Activated T-helper 2 cell treated with anti-CD3 and anti-CD28 coated beads, Interferon-gamma antibody, Interleukin-2, Interleukin-4, amounts not matched to agents 10 μg/mL and 5 μg/mL and 100 μg/mL, durations not matched to agents 14 hours and 24 hours and 36 hours (primary cell): ENCODE measurements at regions of chr2 and their contacts with region 1.

Region 1: DNA sequence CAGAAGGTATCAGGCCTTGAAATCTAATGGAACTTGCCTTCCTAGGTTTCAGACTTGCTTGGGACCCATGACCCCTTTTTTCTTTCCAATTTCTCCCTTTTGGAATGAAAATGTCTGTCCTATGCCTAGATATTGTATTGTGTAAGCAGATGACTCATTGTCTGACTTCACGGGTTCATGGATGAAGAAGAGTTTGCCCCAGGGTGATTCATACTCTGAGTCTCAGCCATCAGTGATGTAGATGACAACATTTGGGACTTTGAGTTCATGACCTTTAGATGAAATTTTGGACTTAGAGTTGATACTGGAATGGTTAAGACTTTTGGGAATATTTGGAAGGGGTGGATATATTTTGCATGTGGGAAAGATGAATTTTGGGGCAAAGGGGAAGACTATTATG is 11.2 kb upstream of the SCYGR5 start:
- DNase-seq: no peak
- H3K4me3 Mint-ChIP-seq: no peak overlapping the region
- H3K27ac Mint-ChIP-seq: no peak overlapping the region
- H3K4me1 Mint-ChIP-seq: peaks cover 2% of the 10 kb centered on the region
- H3K27me3 Mint-ChIP-seq: peaks cover 3% of the 10 kb centered on the region

Region 2: DNA sequence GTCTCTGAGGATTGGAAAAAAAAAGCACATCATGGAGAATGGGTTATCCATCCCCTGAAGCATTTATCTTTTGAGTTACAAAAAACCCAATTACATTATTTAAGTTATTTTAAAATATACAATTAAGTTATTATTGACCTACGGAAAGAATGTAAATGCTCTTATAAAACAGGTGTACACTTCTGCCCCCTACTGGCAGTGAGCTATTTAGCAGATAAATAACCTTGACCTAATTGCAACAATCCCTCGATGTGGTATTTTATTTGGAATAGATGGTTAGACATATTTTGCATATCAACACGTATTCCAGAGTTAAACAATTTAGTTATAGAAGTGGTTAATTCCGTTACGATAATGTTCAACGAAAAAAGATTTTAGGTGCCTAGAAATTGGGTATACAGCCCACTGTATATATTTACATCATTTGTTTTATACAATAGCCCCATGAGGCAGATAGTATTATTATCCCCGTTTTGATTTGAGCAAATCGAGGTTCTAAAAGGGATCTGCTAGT is 206.8 kb after region 1 on chr2:
- intact Hi-C with region 1: loop called (anchors 1 kb)
- DNase-seq: no peak
- H3K4me3 Mint-ChIP-seq: no peak overlapping the region
- H3K27ac Mint-ChIP-seq: no peak overlapping the region
- H3K4me1 Mint-ChIP-seq: no peaks in the 10 kb centered on the region
- H3K27me3 Mint-ChIP-seq: peaks cover 4% of the 10 kb centered on the region

Region 3: GRCh38 chr2:227884511-227884947 is 229.1 kb after region 1 on chr2:
- intact Hi-C with region 1: loop called (anchors 1 kb)
- DNase-seq: peak; percentile 31
- H3K4me3 Mint-ChIP-seq: no peak overlapping the region
- H3K27ac Mint-ChIP-seq: no peak overlapping the region
- H3K4me1 Mint-ChIP-seq: no peaks in the 10 kb centered on the region
- H3K27me3 Mint-ChIP-seq: no peaks in the 10 kb centered on the region

Region 4: DNA sequence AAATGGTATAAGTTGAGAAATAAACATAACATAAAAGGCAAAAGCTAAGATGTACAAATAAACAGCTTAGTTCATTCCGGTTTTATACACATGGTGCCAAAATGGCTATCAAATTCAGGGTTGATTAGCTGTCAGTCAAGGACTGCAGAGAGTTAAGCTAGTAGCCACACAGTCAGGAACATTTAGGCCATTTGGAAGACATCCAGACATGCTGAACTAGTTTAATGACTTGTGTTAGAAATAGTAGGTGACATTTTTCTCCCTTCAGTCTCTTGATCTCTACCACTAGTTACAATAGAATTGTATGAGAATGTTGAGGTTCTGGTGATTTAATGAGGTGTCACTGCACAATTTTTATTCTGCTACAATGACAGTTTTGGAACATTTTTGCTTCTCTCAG is 920.4 kb after region 1 on chr2:
- intact Hi-C with region 1: no loop called
- DNase-seq: no peak
- H3K4me3 Mint-ChIP-seq: no peak overlapping the region
- H3K27ac Mint-ChIP-seq: no peak overlapping the region
- H3K4me1 Mint-ChIP-seq: no peaks in the 10 kb centered on the region
- H3K27me3 Mint-ChIP-seq: no peaks in the 10 kb centered on the region